PC-9 (cell line): ENCODE measurements at regions of chr12 and their contacts with region 1.

Region 1: GRCh38 chr12:14776236-14776961 is 26.9 kb downstream of the WBP11 start:
- DNase-seq: peak in 1 of 2 experiments; percentile 49
- H3K4me3 ChIP-seq: peak overlapping the region; percentile 91
- H3K27ac ChIP-seq: peak overlapping the region; percentile 89
- H3K4me1 ChIP-seq: peaks cover 41% of the 10 kb centered on the region
- H3K27me3 ChIP-seq: no peaks in the 10 kb centered on the region
- CTCF ChIP-seq: peak; percentile 46; the same call in 1 of the 2 replicates

Region 2: DNA sequence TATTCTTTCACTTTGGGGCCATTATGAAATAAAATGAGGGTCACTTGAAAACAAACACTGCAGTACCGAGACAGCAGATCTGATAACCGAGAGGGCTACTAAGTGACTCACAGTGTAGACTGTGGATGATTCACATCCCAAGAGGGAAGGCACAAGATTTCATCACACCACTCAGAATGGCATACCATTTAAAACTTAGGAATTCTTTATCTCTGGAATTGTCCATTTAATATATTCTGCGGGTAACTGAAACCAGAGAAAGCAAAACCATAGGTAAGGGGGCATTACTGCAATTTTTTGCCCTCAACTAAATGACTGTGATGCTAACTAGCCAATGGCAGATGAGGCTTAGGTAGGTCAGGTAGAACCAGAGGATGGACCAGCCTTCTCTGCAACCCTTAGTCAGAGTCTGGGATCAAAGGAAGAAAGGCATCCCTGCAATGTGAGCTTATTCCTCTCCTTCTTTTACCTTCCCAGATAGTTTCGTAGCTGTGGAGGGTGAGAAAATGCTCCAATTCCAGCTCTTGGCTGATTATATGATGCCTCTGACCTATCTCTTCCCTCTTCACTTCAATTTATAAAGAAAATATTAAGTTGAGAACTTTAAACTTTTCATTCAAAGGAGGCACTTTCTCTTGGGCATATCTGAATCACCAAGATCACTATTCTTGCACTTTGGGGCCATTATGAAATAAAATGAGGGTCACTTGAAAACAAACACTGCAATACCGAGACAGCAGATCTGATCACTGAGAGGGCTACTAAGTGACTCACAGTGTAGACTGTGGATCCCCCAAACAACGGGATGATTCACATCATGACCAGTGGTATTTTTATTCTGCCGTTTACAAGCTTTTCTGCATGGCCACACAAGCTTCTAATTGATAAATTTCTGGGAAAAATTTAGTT is 60.2 kb after region 1 on chr12:
- CTCF ChIA-PET with region 1: no interaction called
- POLR2A ChIA-PET with region 1: interaction called, 5 read pairs
- intact Hi-C with region 1: loop called (anchors 1 kb)
- DNase-seq: peak; percentile 57 to 93
- H3K4me3 ChIP-seq: peak overlapping the region; percentile 31
- H3K27ac ChIP-seq: peak overlapping the region; percentile 90
- H3K4me1 ChIP-seq: peaks cover 45% of the 10 kb centered on the region
- H3K27me3 ChIP-seq: no peaks in the 10 kb centered on the region
- CTCF ChIP-seq: no peak

Region 3: GRCh38 chr12:14970473-14970872 is 194.1 kb after region 1 on chr12:
- CTCF ChIA-PET with region 1: no interaction called
- POLR2A ChIA-PET with region 1: no interaction called
- intact Hi-C with region 1: no loop called
- DNase-seq: no peak
- H3K4me3 ChIP-seq: no peak overlapping the region
- H3K27ac ChIP-seq: no peak overlapping the region
- H3K4me1 ChIP-seq: no peaks in the 10 kb centered on the region
- H3K27me3 ChIP-seq: no peaks in the 10 kb centered on the region
- CTCF ChIP-seq: no peak